Activated CD4-positive, alpha-beta memory T cell treated with anti-CD3 and anti-CD28 coated beads for 36 hours (primary cell): ENCODE measurements at regions of chr3 and their contacts with region 1.

Region 1: GRCh38 chr3:78659386-78659987 is 1108.3 kb downstream of the ROBO1 start:
- DNase-seq: peak; percentile 12
- H3K4me3 Mint-ChIP-seq: no peak overlapping the region
- H3K27ac Mint-ChIP-seq: no peak overlapping the region
- H3K4me1 Mint-ChIP-seq: no peaks in the 10 kb centered on the region
- H3K27me3 Mint-ChIP-seq: no peaks in the 10 kb centered on the region

Region 2: DNA sequence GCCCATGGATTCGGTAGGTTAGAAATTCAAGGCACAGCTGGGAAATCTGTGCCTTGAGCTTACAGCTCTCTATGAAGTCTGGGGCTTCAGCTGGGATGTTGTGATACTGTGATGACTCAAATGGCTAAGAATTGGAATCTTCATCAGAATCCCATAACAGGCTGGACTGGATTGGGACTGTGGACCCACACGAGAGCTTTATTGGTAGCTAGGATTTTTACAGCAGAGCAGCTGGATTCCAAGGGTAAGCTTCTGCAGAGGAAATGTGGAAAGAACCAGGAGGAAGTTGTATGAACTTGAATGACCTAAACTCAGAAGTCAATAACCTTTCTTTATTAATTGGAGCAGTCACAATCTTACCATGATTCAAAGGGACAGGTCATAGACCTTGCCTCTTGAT is 78.8 kb before region 1 on chr3:
- CTCF ChIA-PET with region 1: no interaction called
- POLR2A ChIA-PET with region 1: no interaction called
- intact Hi-C with region 1: no loop called
- DNase-seq: no peak
- H3K4me3 Mint-ChIP-seq: no peak overlapping the region
- H3K27ac Mint-ChIP-seq: no peak overlapping the region
- H3K4me1 Mint-ChIP-seq: no peaks in the 10 kb centered on the region
- H3K27me3 Mint-ChIP-seq: no peaks in the 10 kb centered on the region

Region 3: DNA sequence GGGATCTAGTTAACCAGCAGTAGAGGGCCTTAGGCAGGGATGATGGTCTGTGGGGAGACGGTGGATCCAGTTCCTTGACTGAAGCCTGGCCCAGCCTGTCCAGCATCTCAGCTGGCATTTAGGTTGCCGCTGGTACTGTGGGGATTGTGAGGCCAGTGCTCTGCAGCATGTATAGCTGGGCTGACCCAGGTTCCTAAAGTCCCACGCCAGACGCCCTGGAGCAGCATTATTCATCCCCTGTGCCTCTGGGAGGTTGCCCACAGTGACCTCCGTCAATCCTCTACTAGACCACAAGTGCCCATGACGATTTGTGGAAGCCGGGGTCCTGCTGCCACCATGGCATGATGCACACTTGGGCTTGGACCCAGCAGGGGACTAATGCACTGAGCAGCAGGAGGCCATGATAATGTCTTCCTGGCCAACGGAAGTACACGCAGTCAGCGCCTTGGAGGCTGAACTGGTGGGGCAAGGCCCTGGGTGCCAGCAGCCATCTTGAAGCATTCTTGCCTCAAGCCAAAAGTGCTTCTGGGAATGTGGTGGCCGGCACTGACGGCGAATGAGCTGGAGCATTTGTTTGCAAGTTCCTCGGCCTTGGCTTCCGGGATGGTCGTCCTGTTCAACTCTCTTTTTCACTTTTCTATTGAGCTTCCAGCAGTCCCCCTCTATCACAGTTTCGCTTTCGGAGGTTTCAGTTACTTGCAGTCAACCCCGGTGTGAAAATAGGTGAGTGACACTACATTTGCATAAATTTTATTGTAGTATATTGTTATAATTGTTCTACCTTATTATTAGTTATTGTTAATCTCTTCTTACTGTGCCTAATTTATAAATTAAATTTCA is 158.9 kb after region 1 on chr3:
- CTCF ChIA-PET with region 1: no interaction called
- POLR2A ChIA-PET with region 1: no interaction called
- intact Hi-C with region 1: no loop called
- DNase-seq: no peak
- H3K4me3 Mint-ChIP-seq: no peak overlapping the region
- H3K27ac Mint-ChIP-seq: no peak overlapping the region
- H3K4me1 Mint-ChIP-seq: no peaks in the 10 kb centered on the region
- H3K27me3 Mint-ChIP-seq: no peaks in the 10 kb centered on the region

Region 4: GRCh38 chr3:79361748-79362378 is 702.4 kb after region 1 on chr3:
- CTCF ChIA-PET with region 1: no interaction called
- POLR2A ChIA-PET with region 1: no interaction called
- intact Hi-C with region 1: loop called (anchors 5 kb)
- DNase-seq: no peak
- H3K4me3 Mint-ChIP-seq: no peak overlapping the region
- H3K27ac Mint-ChIP-seq: no peak overlapping the region
- H3K4me1 Mint-ChIP-seq: no peaks in the 10 kb centered on the region
- H3K27me3 Mint-ChIP-seq: no peaks in the 10 kb centered on the region

Region 5: GRCh38 chr3:79497447-79498111 is 838.1 kb after region 1 on chr3:
- CTCF ChIA-PET with region 1: no interaction called
- POLR2A ChIA-PET with region 1: no interaction called
- intact Hi-C with region 1: loop called (anchors 5 kb)
- DNase-seq: no peak
- H3K4me3 Mint-ChIP-seq: no peak overlapping the region
- H3K27ac Mint-ChIP-seq: no peak overlapping the region
- H3K4me1 Mint-ChIP-seq: no peaks in the 10 kb centered on the region
- H3K27me3 Mint-ChIP-seq: no peaks in the 10 kb centered on the region